ENCODE measurements at regions of chr10 and their contacts with region 1.

Region 1: DNA sequence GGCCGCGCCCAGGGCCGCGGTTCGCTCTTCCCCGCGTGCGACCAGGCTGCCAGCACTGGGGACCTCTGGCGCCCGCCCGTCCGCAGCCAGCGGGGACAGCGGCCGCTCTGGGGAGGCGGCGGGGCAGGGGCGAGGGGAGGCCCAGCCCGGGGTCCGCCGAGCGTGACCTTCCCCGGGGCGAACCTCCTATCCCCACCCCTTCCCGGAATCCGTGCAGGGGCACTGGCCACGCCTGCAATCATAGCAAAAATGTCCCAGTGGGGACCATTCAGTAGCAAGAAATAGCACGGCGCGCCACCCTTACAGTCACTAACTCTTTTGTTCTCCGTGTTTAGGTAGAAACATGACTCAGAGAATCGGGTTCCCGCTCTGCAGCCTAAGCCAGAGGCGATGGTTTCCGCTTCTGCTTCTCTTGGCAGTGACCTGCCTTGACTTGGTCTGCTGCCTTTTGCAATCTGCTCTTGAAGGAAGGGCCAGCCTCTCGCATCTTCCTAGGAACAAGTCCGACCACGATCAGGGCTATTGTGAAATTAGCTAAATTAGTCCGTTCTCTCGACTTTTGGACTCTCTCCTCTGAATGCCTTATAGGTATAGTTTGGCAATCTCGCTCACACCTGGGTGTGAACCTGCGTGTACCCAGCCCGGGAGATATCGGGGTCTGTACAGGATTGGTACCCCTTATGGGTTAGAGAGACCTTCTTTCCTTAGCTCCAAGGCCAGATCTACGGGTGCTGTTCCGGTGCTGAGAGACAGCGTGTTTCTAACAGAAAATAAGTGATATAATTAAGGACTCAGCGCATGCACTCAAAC is 79.4 kb upstream of the ACBD5 start:
- DNase-seq: peak; percentile 13
- ATAC-seq: no peak
- H3K4me3 Mint-ChIP-seq: no peak overlapping the region
- H3K27ac Mint-ChIP-seq: no peak overlapping the region
- H3K4me1 Mint-ChIP-seq: peaks cover under 1% of the 10 kb centered on the region
- H3K27me3 Mint-ChIP-seq: peaks cover 9% of the 10 kb centered on the region
- CTCF ChIP-seq: no peak

Region 2: GRCh38 chr10:26624006-26624405 is 696.0 kb before region 1 on chr10:
- CTCF ChIA-PET with region 1: no interaction called
- POLR2A ChIA-PET with region 1: no interaction called
- intact Hi-C with region 1: loop called (anchors 2 kb)
- DNase-seq: no peak
- ATAC-seq: no peak
- H3K4me3 Mint-ChIP-seq: no peak overlapping the region
- H3K27ac Mint-ChIP-seq: no peak overlapping the region
- H3K4me1 Mint-ChIP-seq: peaks cover 8% of the 10 kb centered on the region
- H3K27me3 Mint-ChIP-seq: peaks cover 9% of the 10 kb centered on the region
- CTCF ChIP-seq: no peak

Region 3: GRCh38 chr10:27169849-27170248 is 150.1 kb before region 1 on chr10:
- CTCF ChIA-PET with region 1: no interaction called
- POLR2A ChIA-PET with region 1: no interaction called
- intact Hi-C with region 1: no loop called
- DNase-seq: no peak
- ATAC-seq: no peak
- H3K4me3 Mint-ChIP-seq: no peak overlapping the region
- H3K27ac Mint-ChIP-seq: peak overlapping the region; percentile 52
- H3K4me1 Mint-ChIP-seq: peaks cover 13% of the 10 kb centered on the region
- H3K27me3 Mint-ChIP-seq: no peaks in the 10 kb centered on the region
- CTCF ChIP-seq: no peak